ENCODE measurements at regions of chr12 and their contacts with region 1.

Region 1: DNA sequence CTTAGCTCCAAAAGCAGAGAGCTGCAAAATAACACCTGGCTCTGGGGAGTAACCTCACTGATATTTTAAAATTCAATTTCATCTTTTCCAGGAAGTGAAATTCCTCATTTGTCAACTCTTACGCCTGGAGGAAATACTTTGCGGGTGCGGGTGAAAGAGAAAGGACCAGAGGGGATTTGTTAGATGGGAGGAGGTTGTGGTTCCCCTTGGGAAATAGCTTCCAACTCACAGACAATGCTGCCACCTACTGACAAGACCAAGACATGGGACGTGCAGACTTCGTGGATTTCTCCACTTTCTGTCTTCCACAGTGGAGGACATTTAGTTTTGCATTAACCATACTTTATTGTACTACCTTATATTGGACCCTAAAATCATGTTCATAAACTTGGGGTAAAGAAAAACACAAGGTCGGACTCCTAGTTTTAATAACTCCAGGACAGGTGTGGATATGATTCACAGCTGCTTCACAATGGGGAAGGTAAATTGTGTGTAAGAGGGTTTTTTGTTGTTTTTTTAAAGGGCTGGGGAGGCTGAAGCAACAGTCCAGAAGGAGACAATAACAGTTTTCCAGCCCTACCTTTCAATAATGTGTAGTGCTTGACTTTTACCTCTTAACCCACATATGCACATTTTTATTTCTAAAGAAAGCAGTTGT is 10.8 kb downstream of the FBXL14 start:
- DNase-seq: peak; percentile 84
- H3K4me3 Mint-ChIP-seq: no peak overlapping the region
- H3K27ac Mint-ChIP-seq: no peak overlapping the region
- H3K4me1 Mint-ChIP-seq: peaks cover 16% of the 10 kb centered on the region
- H3K27me3 Mint-ChIP-seq: no peaks in the 10 kb centered on the region
- CTCF ChIP-seq: peak; percentile 82

Region 2: DNA sequence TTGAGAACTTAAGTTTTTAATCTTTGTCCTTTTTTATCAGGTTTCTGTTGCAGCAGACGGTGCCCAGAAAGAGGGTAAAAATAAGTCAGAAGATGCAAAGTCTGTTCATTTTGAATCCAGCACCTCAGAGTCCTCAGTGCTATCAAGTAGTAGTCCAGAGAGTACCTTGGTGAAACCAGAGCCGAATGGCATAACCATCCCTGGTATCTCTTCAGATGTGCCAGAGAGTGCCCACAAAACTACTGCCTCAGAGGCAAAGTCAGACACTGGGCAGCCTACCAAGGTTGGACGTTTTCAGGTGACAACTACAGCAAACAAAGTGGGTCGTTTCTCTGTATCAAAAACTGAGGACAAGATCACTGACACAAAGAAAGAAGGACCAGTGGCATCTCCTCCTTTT is 687.5 kb before region 1 on chr12:
- CTCF ChIA-PET with region 1: no interaction called
- POLR2A ChIA-PET with region 1: no interaction called
- intact Hi-C with region 1: loop called (anchors 10 kb)
- DNase-seq: no peak
- H3K4me3 Mint-ChIP-seq: no peak overlapping the region
- H3K27ac Mint-ChIP-seq: no peak overlapping the region
- H3K4me1 Mint-ChIP-seq: peaks cover 6% of the 10 kb centered on the region
- H3K27me3 Mint-ChIP-seq: no peaks in the 10 kb centered on the region
- CTCF ChIP-seq: no peak

Region 3: GRCh38 chr12:949453-950191 is 633.9 kb before region 1 on chr12 and contains the start of gene RAD52:
- CTCF ChIA-PET with region 1: interaction called, 3 read pairs
- POLR2A ChIA-PET with region 1: interaction called, 7 read pairs
- intact Hi-C with region 1: loop called (anchors 1 kb)
- DNase-seq: peak; percentile 98
- H3K4me3 Mint-ChIP-seq: peak within 1 kb of the TSS; percentile 96
- H3K27ac Mint-ChIP-seq: peak within 1 kb of the TSS; percentile 86
- H3K4me1 Mint-ChIP-seq: peaks cover 26% of the 10 kb centered on the region
- H3K27me3 Mint-ChIP-seq: no peaks in the 10 kb centered on the region
- CTCF ChIP-seq: peak; percentile 92
- total RNA-seq, gene RAD52: 26.0 and 27.9 TPM in 2 replicates

Region 4: GRCh38 chr12:1130164-1130563 is 453.4 kb before region 1 on chr12:
- CTCF ChIA-PET with region 1: interaction called, 11 read pairs
- POLR2A ChIA-PET with region 1: no interaction called
- intact Hi-C with region 1: no loop called
- DNase-seq: peak; percentile 41
- H3K4me3 Mint-ChIP-seq: no peak overlapping the region
- H3K27ac Mint-ChIP-seq: no peak overlapping the region
- H3K4me1 Mint-ChIP-seq: peaks cover 9% of the 10 kb centered on the region
- H3K27me3 Mint-ChIP-seq: no peaks in the 10 kb centered on the region
- CTCF ChIP-seq: no peak

Region 5: DNA sequence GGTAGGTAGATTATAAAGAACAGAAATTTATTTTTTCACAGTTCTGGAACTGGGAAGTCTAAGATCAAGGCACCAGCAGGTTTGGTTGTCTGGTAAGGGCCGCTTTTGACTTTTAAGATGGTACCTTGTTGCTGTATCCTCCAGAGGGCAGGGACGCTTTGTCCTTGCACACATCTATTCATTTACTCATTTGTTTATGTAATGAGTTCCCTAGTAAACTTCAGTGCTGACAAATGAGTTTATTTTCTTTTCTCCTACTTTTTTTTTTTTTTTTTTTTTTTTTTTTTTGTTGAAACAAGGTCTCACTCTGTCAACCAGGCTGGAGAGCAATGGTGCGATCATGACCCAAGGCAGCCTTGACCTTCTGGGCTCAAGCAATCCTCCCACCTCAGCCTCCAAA is 184.9 kb before region 1 on chr12:
- CTCF ChIA-PET with region 1: interaction called, 4 read pairs
- POLR2A ChIA-PET with region 1: no interaction called
- intact Hi-C with region 1: loop called (anchors 1 kb)
- DNase-seq: peak; percentile 21
- H3K4me3 Mint-ChIP-seq: no peak overlapping the region
- H3K27ac Mint-ChIP-seq: no peak overlapping the region
- H3K4me1 Mint-ChIP-seq: no peaks in the 10 kb centered on the region
- H3K27me3 Mint-ChIP-seq: no peaks in the 10 kb centered on the region
- CTCF ChIP-seq: no peak

Region 6: GRCh38 chr12:1559676-1560091 is 23.9 kb before region 1 on chr12:
- CTCF ChIA-PET with region 1: interaction called, 11 read pairs
- POLR2A ChIA-PET with region 1: no interaction called
- intact Hi-C with region 1: no loop called
- DNase-seq: no peak
- H3K4me3 Mint-ChIP-seq: no peak overlapping the region
- H3K27ac Mint-ChIP-seq: no peak overlapping the region
- H3K4me1 Mint-ChIP-seq: no peaks in the 10 kb centered on the region
- H3K27me3 Mint-ChIP-seq: no peaks in the 10 kb centered on the region
- CTCF ChIP-seq: no peak

Region 7: DNA sequence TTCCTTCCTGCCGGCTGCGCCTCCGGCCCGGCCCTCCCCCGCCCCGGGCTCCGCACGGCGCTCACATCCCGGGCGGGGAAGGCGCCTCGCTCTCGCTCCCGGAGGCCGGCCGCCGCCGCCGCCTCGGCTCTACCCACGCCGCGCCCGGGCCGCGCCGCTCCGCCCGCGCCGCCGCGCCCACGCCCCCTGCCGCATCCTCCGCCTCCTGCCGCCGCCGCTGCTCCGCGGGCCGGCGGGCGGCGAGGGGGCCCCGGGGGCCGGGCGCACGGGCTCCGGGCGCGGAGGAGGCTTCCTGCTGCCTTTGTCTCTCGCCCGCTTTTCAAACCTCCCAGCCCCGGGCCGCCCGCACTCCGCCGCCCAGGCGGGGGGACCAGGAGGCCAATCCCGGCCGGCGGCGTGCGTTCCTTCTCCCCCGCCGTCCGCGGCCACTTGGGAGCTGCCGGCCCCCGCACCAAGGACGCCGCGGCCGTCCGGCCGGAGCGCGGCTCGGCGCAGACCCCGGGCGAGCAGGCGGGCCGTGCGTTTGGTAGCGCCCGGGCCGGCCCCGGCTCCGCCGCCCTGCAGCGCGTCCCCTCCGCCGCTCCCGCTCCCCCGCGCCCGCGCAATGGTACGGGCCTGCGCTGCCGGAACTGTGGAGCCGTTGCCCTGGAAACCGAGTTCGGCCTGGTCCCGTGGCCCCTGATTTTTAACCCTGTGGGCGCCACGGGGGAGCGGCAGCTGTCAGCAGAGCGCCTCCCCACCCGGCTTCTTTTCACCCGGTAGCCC is 10.9 kb after region 1 on chr12 and contains the start of gene FBXL14:
- CTCF ChIA-PET with region 1: interaction called, 7 read pairs
- POLR2A ChIA-PET with region 1: interaction called, 10 read pairs
- intact Hi-C with region 1: no loop called
- DNase-seq: peak; percentile 70
- H3K4me3 Mint-ChIP-seq: peak within 1 kb of the TSS; percentile 81
- H3K27ac Mint-ChIP-seq: peak within 1 kb of the TSS; percentile 76
- H3K4me1 Mint-ChIP-seq: peaks cover 36% of the 10 kb centered on the region
- H3K27me3 Mint-ChIP-seq: no peaks in the 10 kb centered on the region
- CTCF ChIP-seq: no peak
- total RNA-seq, gene FBXL14: 9.4 and 10.1 TPM in 2 replicates

Measured in MCF 10A (cell line).